Ovary (tissue), 10 donors: ENCODE measurements at regions of chr22 and their contacts with region 1.

Region 1: DNA sequence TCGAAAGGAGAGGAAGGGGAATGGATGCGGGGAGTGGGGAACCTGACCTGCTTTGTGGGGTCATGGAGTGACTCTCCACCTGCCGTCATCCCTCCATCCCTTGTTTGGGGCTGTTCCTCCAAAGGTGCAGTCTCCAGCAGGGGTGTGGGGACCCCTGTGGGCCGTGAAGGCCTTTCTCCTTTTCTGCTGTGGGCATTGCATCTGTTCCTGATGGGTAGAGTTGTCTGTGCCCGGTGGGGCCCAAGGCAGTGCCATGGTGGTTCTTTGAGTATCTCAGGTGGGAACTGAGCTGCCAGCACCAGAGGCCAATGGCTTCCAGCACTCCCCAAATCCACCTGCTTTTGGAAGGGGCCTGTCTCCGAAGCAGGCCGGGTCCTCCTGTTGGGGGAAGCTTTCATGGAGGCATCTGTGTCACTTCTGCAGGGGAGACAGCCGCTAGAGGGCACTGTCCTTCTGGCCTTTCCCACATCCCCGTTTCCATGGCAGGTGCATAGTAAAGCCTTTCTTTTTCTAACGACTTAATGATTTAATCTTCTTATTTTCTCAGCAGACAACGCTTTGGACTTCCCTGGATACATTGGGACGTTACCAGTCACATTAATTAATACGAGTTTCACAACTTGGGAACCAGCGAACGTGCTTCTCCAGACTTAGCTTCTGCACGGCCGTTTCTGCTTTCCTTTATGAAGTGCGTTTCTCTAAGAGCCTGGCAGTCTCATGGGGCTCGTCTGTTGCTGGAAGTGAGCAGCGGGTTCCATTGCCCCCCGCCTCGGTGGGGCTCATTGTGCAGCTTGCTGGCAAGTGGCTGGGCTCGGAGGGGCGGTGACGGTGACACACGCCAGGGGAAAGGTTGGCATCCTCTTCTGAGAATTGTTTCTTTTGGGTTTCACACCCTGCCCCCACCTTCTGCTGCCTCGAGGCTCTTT is 57.1 kb downstream of the PARVB start:
- DNase-seq: peak; percentile 77 to 86 (median 83)
- H3K4me3 ChIP-seq: no peak overlapping the region
- H3K27ac ChIP-seq: no peak overlapping the region
- H3K4me1 ChIP-seq: peaks cover 9% of the 10 kb centered on the region
- H3K27me3 ChIP-seq: no peaks in the 10 kb centered on the region
- CTCF ChIP-seq: peak; percentile 64 to 68 (median 66)
- EP300 ChIP-seq: no peak
- POLR2A ChIP-seq: no peak

Region 2: GRCh38 chr22:43993027-43993760 is 88.0 kb before region 1 on chr22:
- intact Hi-C with region 1: loop called in 2 of 4 experiments (anchors 2 to 5 kb)
- DNase-seq: peak; percentile 51 to 78 (median 64)
- H3K4me3 ChIP-seq: no peak overlapping the region
- H3K27ac ChIP-seq: no peak overlapping the region
- H3K4me1 ChIP-seq: peaks cover under 1% of the 10 kb centered on the region
- H3K27me3 ChIP-seq: no peaks in the 10 kb centered on the region
- CTCF ChIP-seq: peak; percentile 84 to 89 (median 85)
- EP300 ChIP-seq: no peak
- POLR2A ChIP-seq: no peak

Region 3: GRCh38 chr22:44143105-44143474 is 61.9 kb after region 1 on chr22:
- intact Hi-C with region 1: no loop called
- DNase-seq: peak in 1 of 5 donors; percentile 32
- H3K4me3 ChIP-seq: no peak overlapping the region
- H3K27ac ChIP-seq: peak overlapping the region in 1 of 2 donors; percentile 36
- H3K4me1 ChIP-seq: peaks cover 7% of the 10 kb centered on the region
- H3K27me3 ChIP-seq: no peaks in the 10 kb centered on the region
- CTCF ChIP-seq: no peak
- EP300 ChIP-seq: no peak
- POLR2A ChIP-seq: no peak

Region 4: DNA sequence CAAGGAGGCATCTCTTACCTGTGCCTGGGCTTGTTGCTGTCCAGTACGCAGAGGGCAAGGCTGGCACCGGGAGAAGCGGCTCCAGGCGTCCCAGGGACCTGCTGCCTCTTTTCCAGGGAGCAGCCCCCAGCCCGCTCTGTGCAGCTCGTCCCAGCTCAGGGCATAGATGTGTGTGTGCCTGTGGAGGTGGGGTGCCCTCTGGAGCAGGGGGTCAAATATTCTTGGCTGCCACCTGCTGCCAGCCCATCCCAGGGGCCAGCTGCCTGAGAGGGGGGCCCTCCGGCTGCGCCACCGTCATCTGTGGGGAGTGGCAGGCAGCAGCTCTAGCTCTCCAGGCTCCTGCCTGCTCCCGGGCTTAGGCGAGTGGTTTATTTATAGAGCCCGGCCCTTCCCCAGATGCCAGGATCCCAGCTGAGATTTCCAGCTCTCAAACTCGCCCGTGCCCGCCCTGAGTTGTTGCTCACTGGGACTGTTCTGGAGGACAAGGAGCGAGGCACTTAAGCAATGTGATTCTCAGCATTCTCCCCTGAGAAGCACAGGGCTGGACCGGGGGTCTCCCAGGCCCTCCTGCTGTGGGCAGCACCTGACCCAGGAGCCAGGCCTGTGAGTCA is 329.4 kb after region 1 on chr22:
- intact Hi-C with region 1: no loop called
- DNase-seq: peak in 1 of 5 donors; percentile 27
- H3K4me3 ChIP-seq: no peak overlapping the region
- H3K27ac ChIP-seq: no peak overlapping the region
- H3K4me1 ChIP-seq: peaks cover 9% of the 10 kb centered on the region
- H3K27me3 ChIP-seq: no peaks in the 10 kb centered on the region
- CTCF ChIP-seq: no peak
- EP300 ChIP-seq: no peak
- POLR2A ChIP-seq: no peak

Region 5: GRCh38 chr22:44625981-44626687 is 544.9 kb after region 1 on chr22:
- intact Hi-C with region 1: loop called (anchors 5 to 10 kb)
- DNase-seq: peak; percentile 64 to 84 (median 78)
- H3K4me3 ChIP-seq: no peak overlapping the region
- H3K27ac ChIP-seq: no peak overlapping the region
- H3K4me1 ChIP-seq: no peaks in the 10 kb centered on the region
- H3K27me3 ChIP-seq: no peaks in the 10 kb centered on the region
- CTCF ChIP-seq: peak; percentile 91 to 99 (median 99)
- EP300 ChIP-seq: no peak
- POLR2A ChIP-seq: no peak